HCT116 (cell line): ENCODE measurements at regions of chr1 and their contacts with region 1.

Region 1: GRCh38 chr1:57017717-57018116 is 51.9 kb upstream of the C8B start:
- DNase-seq: peak; percentile 8
- ATAC-seq: 0 out of 2 replicates have a peak, but pooled peaks have one; percentile 47
- H3K4me3 ChIP-seq: no peak overlapping the region
- H3K27ac ChIP-seq: no peak overlapping the region
- H3K4me1 ChIP-seq: no peaks in the 10 kb centered on the region
- H3K27me3 ChIP-seq: no peaks in the 10 kb centered on the region
- CTCF ChIP-seq: peak in 2 of 3 experiments; percentile 61 to 67; a peak in 4 of 6 replicates
- POLR2A ChIP-seq: no peak
- RAD21 ChIP-seq: 0 out of 2 replicates have a peak, but pooled peaks have one; percentile 8

Region 2: DNA sequence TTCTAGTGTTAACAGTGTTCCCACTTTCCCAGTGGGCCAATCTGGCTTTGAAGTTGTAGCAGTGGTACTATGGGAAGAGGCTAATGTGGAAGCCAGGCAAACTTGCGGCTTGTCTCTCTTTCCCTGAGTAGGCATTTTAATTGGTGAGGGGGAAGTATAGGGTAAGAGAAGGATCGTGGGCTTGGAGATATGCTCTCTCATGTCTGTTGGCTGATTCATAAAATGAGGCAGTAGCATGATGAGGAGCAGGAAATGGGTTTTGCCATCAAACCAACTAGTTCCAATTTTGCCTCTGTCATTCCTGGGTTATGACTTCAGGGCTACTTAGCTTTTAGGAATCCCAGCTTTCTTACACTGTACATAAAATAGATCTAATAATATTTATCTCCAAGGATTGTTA is 151.1 kb before region 1 on chr1:
- CTCF ChIA-PET with region 1: no interaction called
- POLR2A ChIA-PET with region 1: no interaction called
- RAD21 ChIA-PET with region 1: no interaction called
- intact Hi-C with region 1: no loop called
- DNase-seq: no peak
- ATAC-seq: no peak
- H3K4me3 ChIP-seq: no peak overlapping the region
- H3K27ac ChIP-seq: no peak overlapping the region
- H3K4me1 ChIP-seq: no peaks in the 10 kb centered on the region
- H3K27me3 ChIP-seq: peaks cover 34% of the 10 kb centered on the region
- CTCF ChIP-seq: no peak
- POLR2A ChIP-seq: no peak
- RAD21 ChIP-seq: no peak

Region 3: DNA sequence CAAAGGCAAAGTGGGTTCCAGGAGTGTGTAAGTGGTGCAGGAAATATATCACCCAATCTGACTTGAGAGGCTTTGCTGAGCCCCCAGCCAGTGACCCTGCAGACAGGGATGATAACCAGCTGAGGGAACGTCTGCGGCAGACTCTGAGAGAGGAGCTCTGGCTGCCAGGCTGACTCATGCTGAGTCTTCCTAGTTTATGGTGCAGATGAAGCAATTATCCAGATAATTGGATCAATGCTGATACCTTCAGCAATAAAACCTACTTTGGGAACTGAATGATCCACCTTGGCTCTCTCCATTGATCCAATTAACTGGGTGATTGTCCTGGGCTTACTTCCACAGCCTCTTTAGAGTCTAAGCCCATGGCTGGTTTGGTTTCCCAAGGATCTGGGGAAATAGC is 59.2 kb before region 1 on chr1:
- CTCF ChIA-PET with region 1: no interaction called
- POLR2A ChIA-PET with region 1: no interaction called
- RAD21 ChIA-PET with region 1: no interaction called
- intact Hi-C with region 1: loop called (anchors 10 kb)
- DNase-seq: no peak
- ATAC-seq: no peak
- H3K4me3 ChIP-seq: no peak overlapping the region
- H3K27ac ChIP-seq: no peak overlapping the region
- H3K4me1 ChIP-seq: no peaks in the 10 kb centered on the region
- H3K27me3 ChIP-seq: peaks cover 34% of the 10 kb centered on the region; the same call in 1 of the 2 replicates
- CTCF ChIP-seq: no peak
- POLR2A ChIP-seq: no peak
- RAD21 ChIP-seq: no peak

Region 4: DNA sequence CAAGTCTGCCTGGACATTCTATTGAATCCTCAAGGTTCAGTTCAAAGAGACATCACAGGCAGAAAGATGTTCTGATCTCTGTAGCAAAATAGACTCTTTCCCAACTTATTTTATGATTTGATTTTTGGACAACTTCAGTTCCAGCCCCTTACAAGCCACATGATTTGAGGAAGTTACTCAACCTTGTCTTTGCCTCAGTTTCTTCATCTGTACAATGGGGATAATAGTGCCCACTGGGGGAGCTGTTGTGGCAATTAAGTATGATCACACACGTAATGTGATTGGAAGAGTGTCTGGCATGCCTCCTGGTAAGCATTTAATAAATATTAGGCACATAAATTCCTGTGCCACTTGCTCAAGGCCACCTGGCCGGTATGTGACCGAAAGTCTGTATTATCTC is 275.5 kb after region 1 on chr1:
- CTCF ChIA-PET with region 1: no interaction called
- POLR2A ChIA-PET with region 1: no interaction called
- RAD21 ChIA-PET with region 1: no interaction called
- intact Hi-C with region 1: loop called (anchors 5 kb)
- DNase-seq: no peak
- ATAC-seq: no peak
- H3K4me3 ChIP-seq: no peak overlapping the region
- H3K27ac ChIP-seq: no peak overlapping the region
- H3K4me1 ChIP-seq: no peaks in the 10 kb centered on the region
- H3K27me3 ChIP-seq: 0 out of 2 replicates have a peak, but pooled peaks cover 3% of the 10 kb centered on the region
- CTCF ChIP-seq: no peak
- POLR2A ChIP-seq: no peak
- RAD21 ChIP-seq: no peak